ENCODE measurements at regions of chr17 and their contacts with region 1.

Region 1: DNA sequence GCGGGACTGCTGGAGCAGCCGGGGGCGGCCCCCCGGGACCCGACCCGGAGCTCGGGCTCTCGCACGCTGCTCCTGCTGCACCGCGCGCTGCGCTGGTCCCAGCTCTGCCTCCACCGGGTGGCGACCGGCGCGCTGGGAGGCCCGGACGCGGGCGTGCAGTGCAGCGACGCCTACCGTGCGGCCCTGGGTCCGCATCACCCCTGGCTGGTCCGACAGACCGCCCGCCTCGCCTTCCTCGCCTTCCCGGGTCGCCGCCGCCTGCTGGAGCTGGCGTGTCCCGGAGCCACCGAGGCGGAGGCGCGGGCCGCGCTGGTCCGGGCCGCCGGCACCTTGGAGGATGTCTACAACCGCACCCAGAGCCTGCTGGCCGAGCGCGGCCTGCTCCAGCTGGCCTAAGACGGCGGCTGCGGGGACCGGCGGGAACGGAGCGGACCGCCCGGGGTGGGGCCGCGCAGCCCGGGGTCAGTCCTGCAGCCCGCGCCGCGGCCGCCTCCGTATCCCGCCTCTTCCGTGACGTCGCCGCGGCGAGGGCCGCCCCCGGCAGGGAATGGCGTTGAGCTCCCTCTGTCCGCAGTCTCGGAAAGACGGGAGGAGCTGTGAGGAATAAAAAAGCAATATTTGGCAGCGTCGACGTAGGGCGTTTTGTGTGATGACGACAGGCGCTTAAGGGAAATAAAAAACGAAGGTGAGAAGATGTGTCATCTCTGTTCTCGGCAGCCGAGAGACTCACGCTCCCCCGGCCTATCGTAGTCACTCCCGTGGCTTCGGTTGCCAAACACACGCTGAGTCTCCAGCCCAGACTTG is 1.3 kb downstream of the GLTPD2 start:
- DNase-seq: peak; percentile 89
- H3K4me3 Mint-ChIP-seq: peak overlapping the region; percentile 77
- H3K27ac Mint-ChIP-seq: peak overlapping the region; percentile 82
- H3K4me1 Mint-ChIP-seq: peaks cover 31% of the 10 kb centered on the region
- H3K27me3 Mint-ChIP-seq: peaks cover 25% of the 10 kb centered on the region

Region 2: DNA sequence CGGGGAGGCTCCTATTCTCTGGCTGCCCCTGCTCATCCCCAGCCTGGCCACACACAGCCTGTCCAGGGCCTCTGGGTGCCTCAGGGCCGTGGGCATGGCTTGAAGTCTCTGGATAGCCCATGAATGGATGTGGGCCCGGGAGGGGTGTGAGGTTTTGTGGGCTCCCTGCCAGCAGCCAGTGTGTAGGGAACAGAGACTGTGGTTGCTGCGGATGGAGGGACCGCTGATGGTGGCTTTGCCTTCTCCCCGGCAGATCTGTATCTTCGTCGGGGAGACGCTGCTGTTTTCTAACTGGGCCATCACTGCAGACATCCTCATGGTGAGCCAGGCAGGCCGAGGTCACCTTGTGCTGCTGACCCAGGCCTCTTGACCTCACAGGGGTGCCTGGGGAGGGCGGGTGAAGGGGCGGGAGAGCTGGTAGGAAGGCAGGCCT is 256.6 kb before region 1 on chr17:
- CTCF ChIA-PET with region 1: no interaction called
- POLR2A ChIA-PET with region 1: no interaction called
- intact Hi-C with region 1: no loop called
- DNase-seq: no peak
- H3K4me3 Mint-ChIP-seq: no peak overlapping the region
- H3K27ac Mint-ChIP-seq: no peak overlapping the region
- H3K4me1 Mint-ChIP-seq: no peaks in the 10 kb centered on the region
- H3K27me3 Mint-ChIP-seq: peaks cover 5% of the 10 kb centered on the region

Region 3: DNA sequence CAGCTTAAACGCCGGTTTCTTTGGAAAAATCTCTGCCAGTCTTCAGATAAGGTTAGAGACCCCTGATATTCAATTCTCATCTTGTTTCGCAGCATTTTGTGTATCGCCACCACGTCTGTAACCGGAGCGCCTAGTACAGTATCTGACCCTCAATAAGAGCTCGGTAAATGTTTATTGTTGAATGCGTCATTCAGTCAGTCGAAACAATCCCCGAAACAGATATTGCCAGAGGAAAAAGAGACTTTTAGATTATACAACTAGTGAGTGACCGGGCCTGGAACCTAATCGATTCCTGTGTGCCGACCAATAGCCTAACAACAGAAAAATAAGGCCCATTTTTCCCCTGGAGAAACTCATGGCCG is 86.8 kb before region 1 on chr17:
- CTCF ChIA-PET with region 1: interaction called, 28 read pairs
- POLR2A ChIA-PET with region 1: interaction called, 6 read pairs
- intact Hi-C with region 1: no loop called
- DNase-seq: no peak
- H3K4me3 Mint-ChIP-seq: peak overlapping the region; percentile 92
- H3K27ac Mint-ChIP-seq: peak overlapping the region; percentile 97
- H3K4me1 Mint-ChIP-seq: peaks cover 56% of the 10 kb centered on the region
- H3K27me3 Mint-ChIP-seq: no peaks in the 10 kb centered on the region

Region 4: GRCh38 chr17:4709794-4710692 is 80.1 kb before region 1 on chr17 and contains the start of gene ARRB2:
- CTCF ChIA-PET with region 1: interaction called, 28 read pairs
- POLR2A ChIA-PET with region 1: interaction called, 13 read pairs
- intact Hi-C with region 1: loop called (anchors 2 kb)
- DNase-seq: peak; percentile 99
- H3K4me3 Mint-ChIP-seq: peak within 1 kb of the TSS; percentile 98
- H3K27ac Mint-ChIP-seq: peak within 1 kb of the TSS; percentile 94
- H3K4me1 Mint-ChIP-seq: peaks cover 55% of the 10 kb centered on the region
- H3K27me3 Mint-ChIP-seq: no peaks in the 10 kb centered on the region
- total RNA-seq, gene ARRB2: 210 to 226 TPM

Region 5: GRCh38 chr17:4733073-4733531 is 57.0 kb before region 1 on chr17:
- CTCF ChIA-PET with region 1: interaction called, 14 read pairs
- POLR2A ChIA-PET with region 1: interaction called, 4 read pairs
- intact Hi-C with region 1: loop called (anchors 2 kb)
- DNase-seq: no peak
- H3K4me3 Mint-ChIP-seq: peak overlapping the region; percentile 20
- H3K27ac Mint-ChIP-seq: no peak overlapping the region
- H3K4me1 Mint-ChIP-seq: peaks cover 29% of the 10 kb centered on the region
- H3K27me3 Mint-ChIP-seq: peaks cover under 1% of the 10 kb centered on the region

Region 6: DNA sequence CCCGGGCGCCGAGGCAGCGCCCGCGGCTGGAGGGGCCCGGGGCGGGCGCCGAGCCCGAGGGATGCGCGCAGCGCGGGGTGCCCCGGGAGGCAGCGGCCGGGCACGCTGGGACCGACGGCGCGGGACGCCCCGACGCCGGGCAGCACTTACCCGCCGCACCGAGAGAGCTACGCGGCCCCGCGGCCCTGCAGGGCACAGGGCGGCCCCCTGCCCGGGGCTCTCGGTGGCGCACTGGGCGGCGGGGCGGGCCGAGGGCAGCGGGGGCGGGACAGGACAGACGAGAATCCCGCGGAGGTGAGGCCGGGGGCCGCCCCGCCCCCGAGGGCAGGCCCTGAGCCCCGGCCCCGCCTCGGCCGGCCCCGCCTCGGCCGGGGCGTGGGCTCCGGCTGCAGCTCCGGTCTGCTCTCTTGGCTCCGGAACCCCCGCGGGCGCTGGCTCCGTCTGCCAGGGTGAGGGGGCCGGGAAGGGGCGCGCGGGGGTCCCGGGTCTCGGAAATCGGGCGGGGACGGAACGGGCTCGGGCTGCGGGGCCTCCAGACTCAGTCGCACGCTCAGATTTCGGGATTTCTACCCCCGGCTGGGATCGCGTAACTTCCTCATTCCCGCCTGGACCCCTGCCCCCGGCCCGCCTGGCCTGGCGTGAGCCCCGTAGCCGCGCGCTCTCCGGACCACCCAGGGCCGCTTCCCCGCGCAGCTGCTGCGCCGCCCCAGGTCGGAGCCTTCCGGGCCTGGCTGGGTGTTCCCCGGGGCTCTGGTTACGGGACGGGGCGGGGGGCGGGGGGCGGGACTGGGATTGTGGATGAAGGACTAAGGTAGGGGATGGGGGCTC is 16.9 kb after region 1 on chr17 and contains the start of gene PLD2:
- CTCF ChIA-PET with region 1: interaction called, 28 read pairs
- POLR2A ChIA-PET with region 1: interaction called, 8 read pairs
- intact Hi-C with region 1: no loop called
- DNase-seq: peak; percentile 92
- H3K4me3 Mint-ChIP-seq: peak within 1 kb of the TSS; percentile 74
- H3K27ac Mint-ChIP-seq: no peak within 1 kb of the TSS
- H3K4me1 Mint-ChIP-seq: peaks cover 14% of the 10 kb centered on the region
- H3K27me3 Mint-ChIP-seq: no peaks in the 10 kb centered on the region
- total RNA-seq, gene PLD2: 15.8 to 19.3 TPM

Region 7: GRCh38 chr17:4891411-4892342 is 101.6 kb after region 1 on chr17:
- CTCF ChIA-PET with region 1: interaction called, 6 read pairs
- POLR2A ChIA-PET with region 1: interaction called, 3 read pairs
- intact Hi-C with region 1: loop called (anchors 2 kb)
- DNase-seq: no peak
- H3K4me3 Mint-ChIP-seq: no peak overlapping the region
- H3K27ac Mint-ChIP-seq: no peak overlapping the region
- H3K4me1 Mint-ChIP-seq: no peaks in the 10 kb centered on the region
- H3K27me3 Mint-ChIP-seq: no peaks in the 10 kb centered on the region

Region 8: GRCh38 chr17:4903051-4903818 is 113.1 kb after region 1 on chr17 and contains the start of gene CHRNE:
- CTCF ChIA-PET with region 1: interaction called, 10 read pairs
- POLR2A ChIA-PET with region 1: interaction called, 9 read pairs
- intact Hi-C with region 1: loop called (anchors 5 kb)
- DNase-seq: peak; percentile 84
- H3K4me3 Mint-ChIP-seq: peak within 1 kb of the TSS; percentile 8
- H3K27ac Mint-ChIP-seq: peak within 1 kb of the TSS; percentile 39
- H3K4me1 Mint-ChIP-seq: peaks cover 36% of the 10 kb centered on the region
- H3K27me3 Mint-ChIP-seq: peaks cover 1% of the 10 kb centered on the region
- total RNA-seq, gene CHRNE: 0.45 to 0.56 TPM

Measured in activated CD4-positive, alpha-beta memory T cell treated with anti-CD3 and anti-CD28 coated beads for 36 hours (primary cell).